ENCODE measurements at regions of chr1 and their contacts with region 1.

Region 1: DNA sequence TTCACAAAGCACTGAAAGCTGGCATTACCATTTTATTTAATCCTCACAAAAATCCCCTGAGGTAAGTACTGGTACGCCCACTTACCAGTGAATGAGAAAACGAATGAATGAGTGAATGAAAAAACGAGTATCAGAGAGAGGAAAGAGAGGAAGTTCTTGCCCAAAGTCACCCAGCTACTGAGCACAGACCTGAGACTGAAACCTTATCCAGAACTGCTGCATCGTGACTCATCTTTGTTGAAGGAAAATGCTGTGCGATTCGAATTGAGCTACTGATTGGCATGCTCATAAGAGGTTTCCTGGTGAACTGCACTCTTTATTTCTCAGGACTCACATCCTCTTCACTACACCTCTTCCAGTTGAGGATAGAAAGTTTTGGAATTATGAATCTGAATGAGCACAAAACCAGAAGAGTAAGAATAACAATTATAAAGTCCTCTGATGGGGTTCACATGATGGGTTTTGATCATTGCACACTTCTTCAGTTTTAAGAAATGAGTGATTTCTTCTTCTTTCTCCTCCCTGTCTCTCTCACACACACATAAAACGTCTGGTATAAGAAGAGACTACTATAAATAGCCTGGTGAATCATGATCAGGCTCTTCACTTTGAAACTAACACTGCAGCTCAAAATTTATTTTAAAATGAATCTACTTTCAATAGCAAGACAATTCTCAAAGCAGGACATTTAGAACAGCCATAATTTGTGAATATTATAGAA is 32.1 kb downstream of the IL12RB2 start:
- DNase-seq: peak; percentile 66
- H3K4me3 Mint-ChIP-seq: peak overlapping the region; percentile 1
- H3K27ac Mint-ChIP-seq: peak overlapping the region; percentile 97
- H3K4me1 Mint-ChIP-seq: peaks cover 77% of the 10 kb centered on the region
- H3K27me3 Mint-ChIP-seq: no peaks in the 10 kb centered on the region

Region 2: GRCh38 chr1:66331657-66332547 is 1007.9 kb before region 1 on chr1:
- CTCF ChIA-PET with region 1: no interaction called
- POLR2A ChIA-PET with region 1: no interaction called
- intact Hi-C with region 1: loop called (anchors 10 kb)
- DNase-seq: peak; percentile 75
- H3K4me3 Mint-ChIP-seq: peak overlapping the region; percentile 93
- H3K27ac Mint-ChIP-seq: peak overlapping the region; percentile 96
- H3K4me1 Mint-ChIP-seq: peaks cover 48% of the 10 kb centered on the region
- H3K27me3 Mint-ChIP-seq: no peaks in the 10 kb centered on the region

Region 3: DNA sequence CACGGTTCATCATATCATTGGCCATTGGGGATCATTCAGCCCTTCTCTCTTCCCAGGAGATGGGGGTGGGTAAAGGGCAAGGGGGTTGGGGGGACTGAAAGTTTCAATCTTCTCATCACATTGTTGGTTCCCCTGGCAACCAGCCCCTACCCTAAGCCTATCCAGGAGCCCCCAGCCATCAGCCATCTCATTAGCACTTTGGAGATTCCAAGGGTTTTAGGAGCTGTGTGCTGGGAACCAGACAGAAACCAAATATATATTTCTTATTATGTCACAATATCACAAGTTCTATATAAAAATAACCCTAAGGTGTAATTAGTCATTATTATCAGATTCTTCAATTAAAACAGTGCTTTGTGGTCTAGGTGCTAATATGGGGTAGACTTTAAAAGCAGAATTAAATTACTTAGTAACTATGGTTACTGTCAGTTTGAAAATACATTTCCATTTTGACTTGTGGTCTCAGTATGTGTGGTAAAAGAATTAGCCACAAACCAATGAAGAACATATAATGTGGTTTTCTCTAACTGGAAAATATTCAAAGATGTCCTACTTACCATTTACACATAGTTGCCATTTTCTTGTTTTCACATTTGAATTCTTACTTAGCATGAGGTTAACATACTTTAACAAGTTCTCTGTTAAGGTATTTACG is 145.4 kb before region 1 on chr1:
- CTCF ChIA-PET with region 1: no interaction called
- POLR2A ChIA-PET with region 1: interaction called, 12 read pairs
- intact Hi-C with region 1: no loop called
- DNase-seq: no peak
- H3K4me3 Mint-ChIP-seq: no peak overlapping the region
- H3K27ac Mint-ChIP-seq: peak overlapping the region; percentile 79
- H3K4me1 Mint-ChIP-seq: peaks cover 28% of the 10 kb centered on the region
- H3K27me3 Mint-ChIP-seq: peaks cover 5% of the 10 kb centered on the region

Region 4: GRCh38 chr1:67294836-67295617 is 44.8 kb before region 1 on chr1:
- CTCF ChIA-PET with region 1: no interaction called
- POLR2A ChIA-PET with region 1: interaction called, 10 read pairs
- intact Hi-C with region 1: no loop called
- DNase-seq: peak; percentile 56
- H3K4me3 Mint-ChIP-seq: no peak overlapping the region
- H3K27ac Mint-ChIP-seq: peak overlapping the region; percentile 72
- H3K4me1 Mint-ChIP-seq: peaks cover 23% of the 10 kb centered on the region
- H3K27me3 Mint-ChIP-seq: peaks cover 10% of the 10 kb centered on the region

Region 5: GRCh38 chr1:67350783-67351182 is 11.0 kb after region 1 on chr1:
- CTCF ChIA-PET with region 1: interaction called, 4 read pairs
- POLR2A ChIA-PET with region 1: interaction called, 14 read pairs
- intact Hi-C with region 1: loop called (anchors 1 kb)
- DNase-seq: peak; percentile 82
- H3K4me3 Mint-ChIP-seq: no peak overlapping the region
- H3K27ac Mint-ChIP-seq: peak overlapping the region; percentile 59
- H3K4me1 Mint-ChIP-seq: peaks cover 41% of the 10 kb centered on the region
- H3K27me3 Mint-ChIP-seq: no peaks in the 10 kb centered on the region

Region 6: GRCh38 chr1:67479146-67479891 is 139.5 kb after region 1 on chr1:
- CTCF ChIA-PET with region 1: no interaction called
- POLR2A ChIA-PET with region 1: interaction called, 11 read pairs
- intact Hi-C with region 1: no loop called
- DNase-seq: peak; percentile 48
- H3K4me3 Mint-ChIP-seq: no peak overlapping the region
- H3K27ac Mint-ChIP-seq: no peak overlapping the region
- H3K4me1 Mint-ChIP-seq: peaks cover 9% of the 10 kb centered on the region
- H3K27me3 Mint-ChIP-seq: no peaks in the 10 kb centered on the region

Region 7: DNA sequence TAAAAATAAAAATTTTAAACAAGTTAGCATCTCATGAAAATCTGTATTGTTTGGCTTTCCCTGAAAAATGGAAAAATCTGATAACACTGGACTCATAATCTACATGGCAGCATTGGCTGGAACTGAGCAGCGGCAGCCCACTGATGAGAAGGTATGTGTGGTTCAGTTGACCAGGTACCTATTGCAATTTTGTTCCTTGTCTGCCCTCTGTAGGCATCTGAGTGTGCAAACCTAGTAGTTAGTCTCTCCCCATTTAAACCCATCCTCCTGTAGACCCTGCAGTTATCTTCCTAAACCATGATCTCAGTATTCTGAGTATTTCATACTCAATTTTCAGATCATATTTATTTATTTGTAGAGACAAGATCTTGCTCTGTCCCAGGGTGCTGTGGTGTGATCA is 149.9 kb after region 1 on chr1:
- CTCF ChIA-PET with region 1: no interaction called
- POLR2A ChIA-PET with region 1: no interaction called
- intact Hi-C with region 1: no loop called
- DNase-seq: peak; percentile 12
- H3K4me3 Mint-ChIP-seq: no peak overlapping the region
- H3K27ac Mint-ChIP-seq: no peak overlapping the region
- H3K4me1 Mint-ChIP-seq: peaks cover under 1% of the 10 kb centered on the region
- H3K27me3 Mint-ChIP-seq: no peaks in the 10 kb centered on the region